ENCODE measurements at regions of chr20 and their contacts with region 1.

Region 1: DNA sequence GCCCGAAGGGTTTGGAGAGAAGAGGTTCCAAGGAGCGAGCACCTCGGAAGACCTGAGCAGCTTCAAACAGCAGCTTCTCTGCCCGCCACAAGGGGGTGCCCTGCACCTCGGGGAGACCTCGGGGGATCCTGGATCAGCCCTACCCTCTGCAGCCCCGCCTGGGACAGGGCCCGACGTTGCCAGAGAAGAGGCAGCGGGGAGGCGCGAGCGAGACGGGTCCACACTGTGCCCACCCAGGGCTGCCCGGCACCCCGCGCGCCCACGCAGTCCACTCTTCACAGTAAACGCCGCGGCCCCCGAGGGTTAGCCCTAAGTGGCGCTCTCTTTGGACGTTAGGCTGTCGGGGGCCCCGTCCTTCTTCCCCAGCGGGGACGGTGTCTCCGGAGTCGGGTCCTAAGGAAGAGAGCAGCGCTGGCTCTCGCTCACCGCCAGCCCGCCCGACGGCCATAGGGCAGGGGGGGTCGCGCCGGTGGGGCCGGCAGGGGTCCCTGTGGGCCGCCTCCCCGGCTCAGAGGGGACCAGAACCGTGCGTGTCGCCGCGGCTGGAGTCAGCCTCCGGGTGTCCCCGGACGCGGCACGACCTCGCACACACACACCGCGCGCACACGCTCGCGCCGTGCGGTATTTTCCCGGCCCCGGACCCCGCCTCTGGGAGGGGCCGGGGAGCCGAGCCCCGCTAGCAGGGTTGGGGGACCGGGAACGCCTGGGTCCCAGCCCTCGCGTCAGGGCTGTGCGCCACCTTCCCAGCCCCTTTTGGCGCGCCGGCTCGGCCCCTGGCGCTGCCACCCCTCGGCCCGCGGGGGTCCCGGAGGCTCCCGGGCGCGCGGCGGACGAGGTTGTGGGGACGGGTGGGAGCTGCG is 929 bp downstream of the CDH22 start:
- DNase-seq: peak; percentile 22
- H3K4me3 ChIP-seq: no peak overlapping the region
- H3K27ac ChIP-seq: no peak overlapping the region
- H3K4me1 ChIP-seq: no peaks in the 10 kb centered on the region
- H3K27me3 ChIP-seq: peaks cover 48 to 60% of the 10 kb centered on the region in 2 experiments
- CTCF ChIP-seq: peak; percentile 75 to 88
- POLR2A ChIP-seq: no peak

Region 2: DNA sequence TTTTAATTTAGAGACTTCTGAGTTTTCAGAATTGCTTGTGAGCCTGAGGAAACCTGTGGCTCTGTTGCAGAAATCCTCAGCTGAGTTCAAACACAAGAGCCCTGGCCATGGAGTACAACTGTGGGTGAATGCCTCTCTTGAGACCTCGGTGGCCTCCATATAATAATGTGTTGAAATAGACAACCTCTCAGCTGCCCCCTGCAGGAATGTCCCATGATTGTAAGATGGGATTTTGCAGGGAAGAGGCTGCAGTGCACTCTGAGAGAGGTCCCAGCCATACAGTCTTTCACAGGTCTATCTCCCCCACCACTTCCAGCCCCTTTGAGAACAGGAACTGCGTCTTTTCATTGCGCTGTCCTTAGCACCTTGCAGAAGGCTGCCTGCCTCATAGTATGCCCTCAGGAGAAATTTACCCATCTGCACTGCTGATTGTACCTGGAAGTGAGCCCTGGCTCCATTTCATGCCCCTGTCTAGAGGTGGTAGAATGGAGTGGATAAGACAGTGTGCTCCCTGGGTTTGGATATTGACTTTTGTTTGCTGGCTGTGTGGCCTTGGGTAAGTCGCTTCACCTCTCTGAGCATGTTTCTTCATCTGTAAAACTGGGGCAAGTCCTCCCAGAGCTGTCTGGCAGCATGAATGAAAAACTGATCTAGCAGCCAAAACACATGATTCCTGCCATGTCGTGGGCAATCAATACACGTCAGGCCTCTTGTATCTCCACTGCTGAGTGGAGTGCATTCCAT is 17.8 kb after region 1 on chr20:
- CTCF ChIA-PET with region 1: interaction called, 13 read pairs
- POLR2A ChIA-PET with region 1: no interaction called
- dilution Hi-C with region 1: no loop called
- intact Hi-C with region 1: no loop called
- DNase-seq: peak; percentile 42
- H3K4me3 ChIP-seq: no peak overlapping the region
- H3K27ac ChIP-seq: no peak overlapping the region
- H3K4me1 ChIP-seq: no peaks in the 10 kb centered on the region
- H3K27me3 ChIP-seq: peaks cover 0 to 8% of the 10 kb centered on the region in 2 experiments
- CTCF ChIP-seq: peak; percentile 36 to 50
- POLR2A ChIP-seq: no peak

Region 3: DNA sequence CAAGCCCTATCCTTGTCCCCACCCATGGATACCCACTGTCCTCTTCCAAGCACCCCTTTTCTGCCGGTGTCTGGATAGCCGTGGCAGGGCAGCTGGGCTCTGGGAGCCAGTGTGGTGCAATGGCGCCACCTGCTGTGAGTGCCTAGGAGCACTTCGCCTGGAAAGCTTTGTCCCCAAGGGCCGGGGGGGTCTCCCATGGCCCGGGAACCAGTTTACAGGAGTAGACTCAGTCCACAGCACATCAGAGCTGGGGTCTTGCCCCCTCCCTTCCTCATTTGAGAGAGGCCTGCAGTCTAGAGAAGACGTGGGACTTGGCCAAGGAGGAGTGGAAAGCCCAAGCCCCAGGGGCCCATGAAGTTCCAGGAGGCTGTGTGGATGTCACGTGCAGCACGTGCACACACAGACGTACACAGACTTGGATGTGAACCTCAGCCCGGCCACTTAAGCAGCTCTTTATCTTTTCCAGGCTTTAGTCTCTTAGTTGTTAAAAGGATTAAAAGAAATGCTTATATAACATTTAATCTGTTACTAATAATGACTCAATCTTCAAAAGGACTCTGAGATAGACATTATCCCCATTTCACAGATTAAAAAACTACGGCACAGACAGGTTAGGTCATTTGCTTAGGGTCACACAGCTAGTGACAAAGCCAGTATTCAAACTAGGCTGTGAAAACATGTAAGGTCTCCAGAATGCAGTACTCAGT is 41.8 kb after region 1 on chr20:
- CTCF ChIA-PET with region 1: interaction called, 42 read pairs
- POLR2A ChIA-PET with region 1: no interaction called
- dilution Hi-C with region 1: no loop called
- intact Hi-C with region 1: loop called (anchors 1 kb)
- DNase-seq: peak; percentile 48
- H3K4me3 ChIP-seq: no peak overlapping the region
- H3K27ac ChIP-seq: no peak overlapping the region
- H3K4me1 ChIP-seq: peaks cover 9% of the 10 kb centered on the region
- H3K27me3 ChIP-seq: peaks cover 1 to 4% of the 10 kb centered on the region in 2 experiments
- CTCF ChIP-seq: peak; percentile 74 to 87
- POLR2A ChIP-seq: no peak

Region 4: GRCh38 chr20:46363800-46364634 is 56.6 kb after region 1 on chr20:
- CTCF ChIA-PET with region 1: interaction called, 10 read pairs
- POLR2A ChIA-PET with region 1: no interaction called
- dilution Hi-C with region 1: no loop called
- intact Hi-C with region 1: no loop called
- DNase-seq: peak; percentile 88
- H3K4me3 ChIP-seq: peak overlapping the region; percentile 49 to 90 (median 67)
- H3K27ac ChIP-seq: peak overlapping the region; percentile 94
- H3K4me1 ChIP-seq: peaks cover 8% of the 10 kb centered on the region
- H3K27me3 ChIP-seq: no peaks in the 10 kb centered on the region
- CTCF ChIP-seq: no peak
- POLR2A ChIP-seq: peak; percentile 68

Region 5: DNA sequence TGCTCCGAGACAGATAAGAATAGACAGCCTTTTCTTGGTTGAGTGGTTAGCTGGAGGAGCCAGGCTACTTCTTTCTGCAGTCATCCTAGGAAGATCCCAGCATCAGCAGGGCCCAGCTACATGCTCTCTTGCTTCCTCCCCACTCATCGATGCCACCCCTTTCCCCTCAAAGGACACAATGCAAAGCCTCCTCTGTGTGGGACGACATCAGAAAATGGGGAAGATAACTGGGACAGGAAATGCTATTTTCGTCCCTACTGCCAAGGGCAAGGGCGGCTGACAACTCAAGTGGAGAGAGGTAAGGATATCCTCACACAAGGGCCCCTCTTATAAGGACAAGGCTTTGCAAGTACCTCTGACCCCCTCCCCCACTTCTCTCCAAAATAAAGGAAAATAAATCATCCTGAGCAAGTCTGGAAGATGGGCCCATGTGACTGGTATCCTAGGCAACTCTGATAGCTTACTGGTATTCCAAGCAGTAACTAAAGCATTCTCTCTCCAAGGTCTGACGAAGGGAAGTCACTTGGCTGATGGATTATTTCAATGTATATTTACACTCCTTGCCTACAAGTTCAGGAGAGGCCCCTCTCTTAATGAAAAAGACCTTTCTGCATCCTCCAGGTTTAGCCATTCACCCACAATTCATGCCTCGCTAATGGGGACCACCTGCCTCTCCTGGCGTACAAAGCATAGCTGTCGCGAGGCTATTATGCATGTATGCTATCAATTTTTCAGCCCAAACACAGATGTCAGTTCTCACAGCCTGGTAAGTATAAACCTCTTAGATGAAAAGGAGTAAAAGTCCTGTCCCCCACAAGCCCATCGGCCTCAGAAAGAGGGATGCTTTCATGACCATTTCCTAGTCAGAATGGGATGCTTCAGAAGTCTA is 87.7 kb after region 1 on chr20:
- CTCF ChIA-PET with region 1: no interaction called
- POLR2A ChIA-PET with region 1: no interaction called
- dilution Hi-C with region 1: no loop called
- intact Hi-C with region 1: no loop called
- DNase-seq: no peak
- H3K4me3 ChIP-seq: no peak overlapping the region
- H3K27ac ChIP-seq: no peak overlapping the region
- H3K4me1 ChIP-seq: peaks cover 12% of the 10 kb centered on the region
- H3K27me3 ChIP-seq: no peaks in the 10 kb centered on the region
- CTCF ChIP-seq: no peak
- POLR2A ChIP-seq: no peak

Region 6: DNA sequence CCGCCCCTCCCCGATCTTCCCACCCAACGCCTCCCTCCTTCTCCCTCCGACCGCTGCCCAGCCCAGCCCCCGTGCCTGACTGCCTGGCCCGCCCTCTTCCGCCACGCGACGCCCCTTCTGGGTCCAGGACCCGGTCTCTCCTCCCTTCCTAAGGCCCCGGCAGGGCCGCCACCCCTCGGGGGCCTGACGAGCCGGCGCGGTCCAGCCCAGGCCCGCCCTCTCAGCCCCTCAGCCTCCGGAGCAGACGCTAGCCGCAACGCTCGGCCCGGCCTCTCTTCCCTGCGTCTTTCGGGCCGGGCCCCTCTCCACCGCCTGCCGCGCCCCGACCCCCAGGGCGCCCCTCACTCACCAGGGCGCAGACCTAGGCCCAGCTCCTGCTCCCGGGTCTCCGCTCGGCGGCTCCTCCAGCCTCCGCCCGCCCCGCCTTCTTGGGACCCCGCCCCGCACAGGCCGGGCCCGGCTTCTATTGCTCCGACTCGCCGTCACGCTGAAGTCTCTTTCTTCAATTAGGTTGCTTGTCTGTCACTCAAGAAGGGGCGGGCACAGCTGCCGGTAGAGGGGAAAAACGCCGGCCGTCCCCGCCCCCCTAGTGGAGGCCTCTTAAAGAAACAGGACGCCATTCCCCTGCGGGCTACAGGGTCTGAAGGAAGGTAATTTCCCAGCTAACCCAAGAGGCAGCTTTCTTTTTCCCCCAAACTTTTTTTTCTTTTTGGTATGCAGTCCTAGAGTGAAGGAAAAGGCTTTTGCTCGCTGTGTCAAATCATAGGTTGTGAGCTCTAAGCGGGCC is 99.0 kb after region 1 on chr20 and contains the start of gene ELMO2:
- CTCF ChIA-PET with region 1: interaction called, 32 read pairs
- POLR2A ChIA-PET with region 1: no interaction called
- dilution Hi-C with region 1: no loop called
- intact Hi-C with region 1: loop called (anchors 1 kb)
- DNase-seq: peak; percentile 97
- H3K4me3 ChIP-seq: peak within 1 kb of the TSS; percentile 69 to 81 (median 75)
- H3K27ac ChIP-seq: peak within 1 kb of the TSS; percentile 36
- H3K4me1 ChIP-seq: peaks cover 17% of the 10 kb centered on the region
- H3K27me3 ChIP-seq: peaks cover 2 to 6% of the 10 kb centered on the region in 2 experiments
- CTCF ChIP-seq: peak in 1 of 2 donors; percentile 9
- POLR2A ChIP-seq: no peak
- total RNA-seq, gene ELMO2: 42.1 and 43.5 TPM in 2 replicates

Region 7: GRCh38 chr20:46411637-46412036 is 104.3 kb after region 1 on chr20:
- CTCF ChIA-PET with region 1: interaction called, 32 read pairs
- POLR2A ChIA-PET with region 1: no interaction called
- dilution Hi-C with region 1: no loop called
- intact Hi-C with region 1: loop called (anchors 1 kb)
- DNase-seq: no peak
- H3K4me3 ChIP-seq: no peak overlapping the region
- H3K27ac ChIP-seq: no peak overlapping the region
- H3K4me1 ChIP-seq: peaks cover 8% of the 10 kb centered on the region
- H3K27me3 ChIP-seq: peaks cover 5 to 17% of the 10 kb centered on the region in 2 experiments
- CTCF ChIP-seq: no peak
- POLR2A ChIP-seq: no peak

Region 8: DNA sequence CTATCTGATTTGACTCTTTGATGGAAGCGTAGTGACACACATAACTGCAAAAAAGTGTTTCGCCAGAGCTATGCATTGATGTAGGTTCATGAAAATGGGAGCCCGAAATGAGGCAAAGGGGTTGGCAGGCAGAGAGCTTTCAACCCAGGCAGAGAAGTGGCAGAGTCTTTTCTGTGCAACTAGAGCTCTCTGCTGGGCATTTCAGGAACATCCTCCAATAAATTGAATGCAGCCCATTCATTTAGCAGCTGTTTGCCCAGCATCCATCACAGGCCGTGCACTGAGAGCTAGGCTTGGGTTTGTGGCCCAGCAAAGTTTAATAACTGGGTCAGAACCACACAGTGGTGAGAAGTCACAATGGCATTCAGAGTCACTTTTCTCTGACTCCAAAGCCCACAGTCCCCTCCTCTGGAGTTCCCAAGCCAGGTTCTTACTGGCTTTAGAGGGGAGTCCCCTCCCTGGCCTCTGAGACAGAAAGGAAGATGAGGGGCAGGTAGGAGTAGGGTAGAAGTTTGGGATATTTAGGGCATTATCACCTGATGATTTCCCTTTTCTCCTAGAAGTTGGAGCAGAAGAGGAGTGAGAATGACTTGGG is 130.9 kb after region 1 on chr20:
- CTCF ChIA-PET with region 1: interaction called, 30 read pairs
- POLR2A ChIA-PET with region 1: no interaction called
- dilution Hi-C with region 1: no loop called
- intact Hi-C with region 1: no loop called
- DNase-seq: peak; percentile 15
- H3K4me3 ChIP-seq: no peak overlapping the region
- H3K27ac ChIP-seq: no peak overlapping the region
- H3K4me1 ChIP-seq: no peaks in the 10 kb centered on the region
- H3K27me3 ChIP-seq: peaks cover 0 to 2% of the 10 kb centered on the region in 2 experiments
- CTCF ChIP-seq: peak in 1 of 2 donors; percentile 30
- POLR2A ChIP-seq: no peak

Region 9: GRCh38 chr20:46468509-46468908 is 161.1 kb after region 1 on chr20:
- CTCF ChIA-PET with region 1: no interaction called
- POLR2A ChIA-PET with region 1: no interaction called
- dilution Hi-C with region 1: no loop called
- intact Hi-C with region 1: no loop called
- DNase-seq: no peak
- H3K4me3 ChIP-seq: no peak overlapping the region
- H3K27ac ChIP-seq: no peak overlapping the region
- H3K4me1 ChIP-seq: no peaks in the 10 kb centered on the region
- H3K27me3 ChIP-seq: no peaks in the 10 kb centered on the region
- CTCF ChIP-seq: no peak
- POLR2A ChIP-seq: no peak